Naive thymus-derived CD4-positive, alpha-beta T cell (primary cell): ENCODE measurements at regions of chr6 and their contacts with region 1.

Region 1: DNA sequence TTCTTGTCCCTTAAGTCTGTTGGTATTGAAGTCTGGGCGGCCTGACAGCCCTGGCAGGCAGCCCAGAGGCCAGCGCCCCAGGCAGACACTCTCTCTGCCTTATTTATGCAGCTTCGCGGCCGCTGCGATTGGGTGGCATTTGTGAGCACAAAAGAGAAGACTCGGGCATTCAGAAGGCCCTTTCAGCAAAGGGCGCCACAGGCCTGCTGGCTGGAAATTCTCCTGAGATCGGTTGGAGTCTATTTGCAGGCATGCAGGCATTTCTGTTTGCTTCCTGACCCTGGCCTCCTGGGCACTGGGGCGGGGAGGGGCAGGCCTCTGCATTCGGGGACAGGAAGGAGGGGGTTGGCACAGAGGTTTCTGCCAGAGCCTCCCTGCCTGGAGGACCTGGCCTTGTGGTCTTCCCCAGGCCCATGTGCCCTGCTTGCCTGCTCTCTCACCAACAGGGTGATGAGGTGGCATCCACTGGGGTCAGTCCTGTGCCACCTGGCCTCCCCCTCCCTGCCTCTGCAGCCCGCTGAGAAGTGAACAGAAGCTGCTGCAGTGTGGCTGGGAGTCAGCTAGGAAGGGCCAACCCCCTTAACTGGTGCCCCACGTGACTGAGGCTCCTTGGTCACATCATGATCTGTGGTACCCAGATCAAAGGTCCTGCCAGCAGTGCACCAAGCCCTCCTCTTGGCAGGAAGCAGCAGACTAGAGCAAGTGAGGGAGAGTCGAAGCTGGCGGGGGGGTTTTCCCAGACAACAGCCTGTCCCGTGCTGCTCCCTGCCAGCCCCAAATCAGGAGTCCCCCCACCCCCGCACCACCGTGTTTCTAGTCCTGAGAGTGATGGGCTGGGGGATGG is 16.6 kb upstream of the CCDC167 start:
- DNase-seq: peak; percentile 60 to 98 (median 89)
- ATAC-seq: peak; percentile 90
- H3K4me3 ChIP-seq: peak overlapping the region; percentile 55
- H3K4me3 Mint-ChIP-seq: peak overlapping the region; percentile 75 to 93 (median 84)
- H3K27ac ChIP-seq: peak overlapping the region; percentile 97
- H3K27ac Mint-ChIP-seq: peak overlapping the region; percentile 92 to 99 (median 97)
- H3K4me1 ChIP-seq: peaks cover 76 to 84% of the 10 kb centered on the region in 2 donors
- H3K4me1 Mint-ChIP-seq: peaks cover 51 to 89% (median 81%) of the 10 kb centered on the region in 7 donors
- H3K27me3 ChIP-seq: no peaks in the 10 kb centered on the region
- H3K27me3 Mint-ChIP-seq: no peaks in the 10 kb centered on the region

Region 2: DNA sequence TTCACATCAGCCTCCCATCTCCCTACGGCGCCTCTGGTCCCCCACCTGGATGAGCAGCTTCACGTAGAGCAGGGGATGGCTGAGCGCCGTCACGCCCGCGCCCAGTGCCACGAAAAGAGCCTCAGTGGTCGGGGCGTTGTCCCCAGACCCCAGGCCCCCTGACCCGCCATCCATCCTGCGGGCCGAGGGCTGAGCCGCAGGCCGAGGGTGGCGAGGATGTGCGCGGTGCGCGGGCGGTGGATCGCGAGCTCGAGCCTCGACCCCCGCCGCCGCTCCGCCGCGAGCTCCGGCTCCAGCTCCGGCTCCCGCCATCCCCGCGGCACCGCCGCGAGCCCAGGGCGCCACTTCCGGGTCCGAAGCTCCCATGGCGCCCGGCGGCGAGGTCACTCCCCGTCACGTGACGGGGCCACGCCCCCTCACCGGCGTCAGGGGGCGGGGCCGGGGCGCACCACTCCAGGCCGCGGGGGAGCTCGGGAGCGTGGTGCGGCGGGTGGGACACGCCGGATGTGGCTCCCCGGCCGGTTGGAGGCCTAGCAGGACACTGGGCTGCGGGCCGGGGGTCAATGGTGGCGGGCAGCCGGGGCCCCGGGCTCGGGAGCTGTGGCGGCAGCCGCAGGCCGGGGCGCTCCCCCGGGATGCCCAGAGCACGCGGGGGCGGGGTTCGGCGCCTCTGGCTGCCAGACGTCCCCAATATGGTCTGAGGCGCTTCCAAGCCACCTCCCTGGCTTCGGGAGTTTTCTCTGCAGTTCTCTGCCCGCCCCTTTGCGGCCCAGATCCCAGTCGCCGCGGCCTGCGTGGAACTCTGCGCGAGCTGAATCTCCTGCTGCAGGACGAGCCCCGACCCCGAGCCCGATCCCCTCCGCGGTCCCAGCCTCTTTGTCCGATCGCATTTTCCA is 530.2 kb before region 1 on chr6 and contains the start of gene MTCH1:
- CTCF ChIA-PET with region 1: no interaction called
- POLR2A ChIA-PET with region 1: no interaction called
- intact Hi-C with region 1: loop called in 1 of 2 experiments (anchors 2 kb)
- DNase-seq: peak; percentile 85 to 98 (median 92)
- ATAC-seq: peak; percentile 93
- H3K4me3 ChIP-seq: peak within 1 kb of the TSS; percentile 98
- H3K4me3 Mint-ChIP-seq: peak within 1 kb of the TSS in 6 of 10 donors; percentile 98 to 100 (median 100)
- H3K27ac ChIP-seq: peak within 1 kb of the TSS; percentile 96
- H3K27ac Mint-ChIP-seq: peak within 1 kb of the TSS in 7 of 9 donors; percentile 98 to 99 (median 99)
- H3K4me1 ChIP-seq: peaks cover 22 to 27% of the 10 kb centered on the region in 2 donors
- H3K4me1 Mint-ChIP-seq: peaks cover 12 to 26% (median 18%) of the 10 kb centered on the region in 7 donors
- H3K27me3 ChIP-seq: no peaks in the 10 kb centered on the region
- H3K27me3 Mint-ChIP-seq: peaks cover 0 to 17% (median 0%) of the 10 kb centered on the region in 5 donors
- total RNA-seq, gene MTCH1: 123 to 198 (median 130) TPM

Region 3: GRCh38 chr6:37483917-37484785 is 32.1 kb before region 1 on chr6:
- CTCF ChIA-PET with region 1: interaction called, 20 read pairs
- POLR2A ChIA-PET with region 1: interaction called, 7 read pairs
- intact Hi-C with region 1: loop called in 1 of 2 experiments (anchors 1 kb)
- DNase-seq: peak; percentile 56 to 85 (median 70)
- ATAC-seq: peak; percentile 85
- H3K4me3 ChIP-seq: no peak overlapping the region
- H3K4me3 Mint-ChIP-seq: no peak overlapping the region
- H3K27ac ChIP-seq: no peak overlapping the region
- H3K27ac Mint-ChIP-seq: peak overlapping the region in 2 of 9 donors; percentile 25 to 36
- H3K4me1 ChIP-seq: peaks cover 9 to 16% of the 10 kb centered on the region in 2 donors
- H3K4me1 Mint-ChIP-seq: peaks cover 13 to 35% (median 20%) of the 10 kb centered on the region in 7 donors
- H3K27me3 ChIP-seq: no peaks in the 10 kb centered on the region
- H3K27me3 Mint-ChIP-seq: no peaks in the 10 kb centered on the region

Region 4: GRCh38 chr6:37499433-37500293 is 16.6 kb before region 1 on chr6 and contains the start of gene CCDC167:
- CTCF ChIA-PET with region 1: interaction called, 54 read pairs
- POLR2A ChIA-PET with region 1: interaction called, 376 read pairs
- intact Hi-C with region 1: loop called (anchors 1 kb)
- DNase-seq: peak; percentile 86 to 96 (median 90)
- ATAC-seq: peak; percentile 76
- H3K4me3 ChIP-seq: peak within 1 kb of the TSS; percentile 78
- H3K4me3 Mint-ChIP-seq: peak within 1 kb of the TSS; percentile 90 to 100 (median 98)
- H3K27ac ChIP-seq: peak within 1 kb of the TSS; percentile 91
- H3K27ac Mint-ChIP-seq: peak within 1 kb of the TSS; percentile 84 to 99 (median 95)
- H3K4me1 ChIP-seq: peaks cover 60 to 67% of the 10 kb centered on the region in 2 donors
- H3K4me1 Mint-ChIP-seq: peaks cover 60 to 93% (median 85%) of the 10 kb centered on the region in 7 donors
- H3K27me3 ChIP-seq: no peaks in the 10 kb centered on the region
- H3K27me3 Mint-ChIP-seq: no peaks in the 10 kb centered on the region
- total RNA-seq, gene CCDC167: 13.8 to 55.1 (median 18.0) TPM

Region 5: DNA sequence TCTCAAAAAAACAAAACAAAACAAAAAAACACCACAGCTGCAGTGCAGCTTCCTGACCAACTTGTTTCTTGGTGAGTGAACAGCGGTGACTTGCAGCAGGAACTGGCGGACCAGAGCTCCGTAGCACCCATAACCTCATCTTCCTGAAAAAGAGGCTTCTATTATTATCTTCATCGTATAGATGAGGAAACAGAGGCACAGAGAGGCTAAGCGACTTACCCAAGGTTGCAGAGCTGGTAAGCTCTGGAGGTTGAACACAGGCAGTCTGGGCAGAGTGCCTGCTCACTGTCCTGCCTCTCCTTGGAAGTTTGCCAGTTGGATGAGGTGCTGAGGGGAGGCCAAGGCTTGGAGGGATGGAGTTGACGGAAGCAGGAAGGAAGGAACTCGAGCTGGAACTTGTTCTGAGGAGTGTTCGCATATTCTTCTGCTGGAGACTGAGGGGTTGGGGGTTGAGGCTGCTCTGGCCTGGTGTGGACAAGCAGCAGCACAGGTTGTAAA is 31.3 kb after region 1 on chr6:
- CTCF ChIA-PET with region 1: interaction called, 5 read pairs
- POLR2A ChIA-PET with region 1: interaction called, 3 read pairs
- intact Hi-C with region 1: loop called in 1 of 2 experiments (anchors 2 kb)
- DNase-seq: peak in 1 of 9 donors; percentile 36
- ATAC-seq: peak; percentile 58
- H3K4me3 ChIP-seq: no peak overlapping the region
- H3K4me3 Mint-ChIP-seq: peak overlapping the region in 7 of 10 donors; percentile 11 to 61 (median 38)
- H3K27ac ChIP-seq: no peak overlapping the region
- H3K27ac Mint-ChIP-seq: peak overlapping the region in 8 of 9 donors; percentile 38 to 91 (median 72)
- H3K4me1 ChIP-seq: peaks cover 14 to 16% of the 10 kb centered on the region in 2 donors
- H3K4me1 Mint-ChIP-seq: peaks cover 0 to 41% (median 12%) of the 10 kb centered on the region in 7 donors
- H3K27me3 ChIP-seq: no peaks in the 10 kb centered on the region
- H3K27me3 Mint-ChIP-seq: peaks cover 0 to 5% (median 0%) of the 10 kb centered on the region in 5 donors

Region 6: DNA sequence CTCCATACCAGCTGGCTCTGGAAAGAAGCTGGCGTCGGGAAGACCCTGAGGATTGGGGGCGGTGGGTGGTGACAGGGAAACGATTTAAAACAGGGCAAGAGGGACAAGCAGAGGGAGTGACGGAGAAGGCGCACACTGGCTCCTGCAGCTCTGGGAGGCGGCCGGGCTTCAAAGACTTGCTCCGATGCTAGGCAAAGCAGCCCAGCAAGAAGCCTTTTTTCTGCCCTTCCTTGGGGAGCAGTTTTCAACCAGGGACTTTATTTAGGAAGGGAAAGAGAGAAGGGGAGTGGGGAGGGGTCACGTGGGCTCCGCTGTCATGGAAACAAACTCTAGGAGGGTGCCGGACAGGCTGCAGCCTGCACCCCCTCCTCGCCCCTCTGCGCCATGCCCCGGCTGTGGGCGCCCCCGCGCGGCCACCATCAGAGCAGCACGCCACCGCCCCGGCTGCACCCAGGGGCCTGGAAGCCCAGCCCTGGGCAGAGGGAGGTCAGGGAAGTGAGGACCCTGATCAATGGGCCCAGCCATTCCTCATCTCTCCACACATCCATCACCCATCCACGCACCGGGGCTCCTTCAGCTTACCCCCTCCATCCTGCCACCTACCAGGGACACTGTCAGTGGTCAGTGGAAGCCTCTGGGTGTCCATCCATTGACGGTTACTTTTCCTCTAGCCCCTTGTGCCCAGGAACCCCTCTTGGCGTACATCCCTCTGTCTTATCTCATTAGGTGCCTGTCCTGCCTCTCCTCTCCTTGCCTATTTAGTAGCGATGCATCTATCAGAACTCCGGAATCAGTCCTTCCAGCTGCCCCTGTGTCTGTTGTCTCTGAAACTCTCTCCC is 50.0 kb after region 1 on chr6:
- CTCF ChIA-PET with region 1: interaction called, 12 read pairs
- POLR2A ChIA-PET with region 1: interaction called, 5 read pairs
- intact Hi-C with region 1: loop called (anchors 1 kb)
- DNase-seq: peak; percentile 45 to 86 (median 70)
- ATAC-seq: peak; percentile 93
- H3K4me3 ChIP-seq: peak overlapping the region; percentile 52
- H3K4me3 Mint-ChIP-seq: peak overlapping the region in 9 of 10 donors; percentile 37 to 80 (median 63)
- H3K27ac ChIP-seq: no peak overlapping the region
- H3K27ac Mint-ChIP-seq: peak overlapping the region in 2 of 9 donors; percentile 8 to 12
- H3K4me1 ChIP-seq: peaks cover 0 to 4% of the 10 kb centered on the region in 2 donors
- H3K4me1 Mint-ChIP-seq: peaks cover 6 to 21% (median 12%) of the 10 kb centered on the region in 7 donors
- H3K27me3 ChIP-seq: no peaks in the 10 kb centered on the region
- H3K27me3 Mint-ChIP-seq: peaks cover 3 to 28% (median 11%) of the 10 kb centered on the region in 5 donors

Region 7: DNA sequence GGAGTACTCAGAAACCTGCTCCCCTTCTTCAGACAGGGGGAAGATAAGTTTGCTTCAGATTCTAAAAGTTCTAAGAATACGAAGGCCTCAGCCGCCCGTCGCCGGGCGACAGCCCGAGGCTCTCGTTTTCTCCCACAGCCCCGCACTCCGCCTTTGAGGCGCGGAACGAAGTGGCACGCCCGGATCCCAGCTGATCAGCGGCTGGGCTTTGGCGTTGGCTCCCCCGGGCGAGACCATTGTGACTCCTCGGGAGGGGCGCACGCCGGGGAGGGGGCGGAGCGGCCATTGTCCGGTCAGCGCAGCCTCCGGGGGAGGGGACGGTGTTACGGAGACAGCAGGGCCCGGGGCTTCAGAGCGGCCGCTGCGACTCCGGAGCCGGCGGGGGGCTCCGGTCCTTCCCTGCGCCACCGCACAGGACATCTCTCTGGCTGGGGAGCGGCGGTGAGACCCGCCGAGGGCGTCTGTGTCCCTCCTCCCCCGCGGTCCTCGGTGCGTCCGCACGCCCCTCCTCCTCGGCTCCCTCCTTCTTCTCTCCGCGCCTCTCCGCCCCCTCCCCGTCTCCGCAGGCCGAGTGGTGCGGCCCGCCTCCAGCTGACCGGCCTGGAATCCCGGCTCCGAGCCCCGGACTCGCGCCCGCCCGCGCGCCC is 303.0 kb after region 1 on chr6 and contains the start of gene ZFAND3:
- CTCF ChIA-PET with region 1: no interaction called
- POLR2A ChIA-PET with region 1: no interaction called
- intact Hi-C with region 1: loop called in 1 of 2 experiments (anchors 2 kb)
- DNase-seq: peak; percentile 87 to 96 (median 95)
- ATAC-seq: peak; percentile 90
- H3K4me3 ChIP-seq: peak within 1 kb of the TSS; percentile 85
- H3K4me3 Mint-ChIP-seq: peak within 1 kb of the TSS; percentile 90 to 100 (median 96)
- H3K27ac ChIP-seq: peak within 1 kb of the TSS; percentile 93
- H3K27ac Mint-ChIP-seq: peak within 1 kb of the TSS; percentile 94 to 99 (median 98)
- H3K4me1 ChIP-seq: peaks cover 30 to 31% of the 10 kb centered on the region in 2 donors
- H3K4me1 Mint-ChIP-seq: peaks cover 39 to 66% (median 55%) of the 10 kb centered on the region in 7 donors
- H3K27me3 ChIP-seq: no peaks in the 10 kb centered on the region
- H3K27me3 Mint-ChIP-seq: peaks cover 0 to 29% (median 0%) of the 10 kb centered on the region in 5 donors
- total RNA-seq, gene ZFAND3: 31.7 to 55.0 (median 42.5) TPM